A549 (cell line): ENCODE measurements at regions of chr14 and their contacts with region 1.

Region 1: GRCh38 chr14:68862954-68863594 is 70.2 kb upstream of the ZFP36L1 start:
- DNase-seq: peak; percentile 79 to 85
- ATAC-seq: peak; percentile 79 to 85
- H3K4me3 ChIP-seq: no peak overlapping the region
- H3K27ac ChIP-seq: peak overlapping the region; percentile 41 to 62; a peak in 3 of 6 replicates
- H3K4me1 ChIP-seq: no peaks in the 10 kb centered on the region
- CTCF ChIP-seq: peak; percentile 90
- EP300 ChIP-seq: no peak
- POLR2A ChIP-seq: no peak
- RAD21 ChIP-seq: peak; percentile 94 to 95

Region 2: GRCh38 chr14:67883717-67884116 is 979.4 kb before region 1 on chr14:
- CTCF ChIA-PET with region 1: interaction called, 17 read pairs
- POLR2A ChIA-PET with region 1: no interaction called
- DNase-seq: peak; percentile 18
- ATAC-seq: no peak
- H3K4me3 ChIP-seq: no peak overlapping the region
- H3K27ac ChIP-seq: peak overlapping the region in 1 of 2 experiments; percentile 71; a peak in 2 of 6 replicates
- H3K4me1 ChIP-seq: peaks cover 12% of the 10 kb centered on the region; the same call in 1 of the 3 replicates
- CTCF ChIP-seq: peak; percentile 65
- EP300 ChIP-seq: no peak
- POLR2A ChIP-seq: no peak
- RAD21 ChIP-seq: peak; percentile 64 to 79

Region 3: GRCh38 chr14:68444449-68445168 is 418.5 kb before region 1 on chr14:
- CTCF ChIA-PET with region 1: no interaction called
- POLR2A ChIA-PET with region 1: no interaction called
- DNase-seq: no peak
- ATAC-seq: no peak
- H3K4me3 ChIP-seq: no peak overlapping the region
- H3K27ac ChIP-seq: peak overlapping the region; percentile 42 to 57
- H3K4me1 ChIP-seq: peaks cover 43% of the 10 kb centered on the region
- CTCF ChIP-seq: no peak
- EP300 ChIP-seq: no peak
- POLR2A ChIP-seq: no peak
- RAD21 ChIP-seq: no peak

Region 4: DNA sequence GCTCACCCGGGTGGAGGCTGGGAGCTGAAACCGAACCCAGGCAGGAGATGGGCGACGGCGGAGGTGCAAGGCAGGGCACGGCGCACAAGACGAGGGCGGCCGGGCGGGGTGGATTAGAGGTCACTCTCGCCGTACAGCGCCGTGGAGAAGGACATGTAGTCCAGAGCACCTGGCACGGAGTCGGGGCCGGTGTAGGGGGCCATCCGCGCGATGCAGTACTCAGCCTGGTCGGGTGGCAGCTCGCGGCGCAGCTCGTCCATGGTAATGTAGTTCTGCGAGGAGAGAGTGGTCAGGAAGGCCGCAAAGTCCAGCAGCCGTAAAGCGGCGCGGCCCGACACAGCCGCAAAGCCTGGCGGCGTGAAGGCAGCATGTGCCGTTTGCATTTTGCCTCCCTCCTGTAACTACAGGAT is 11.7 kb after region 1 on chr14:
- CTCF ChIA-PET with region 1: interaction called, 33 read pairs
- POLR2A ChIA-PET with region 1: interaction called, 4 read pairs
- DNase-seq: no peak
- ATAC-seq: no peak
- H3K4me3 ChIP-seq: no peak overlapping the region
- H3K27ac ChIP-seq: no peak overlapping the region
- H3K4me1 ChIP-seq: no peaks in the 10 kb centered on the region
- CTCF ChIP-seq: no peak
- EP300 ChIP-seq: no peak
- POLR2A ChIP-seq: no peak
- RAD21 ChIP-seq: no peak

Region 5: GRCh38 chr14:68911594-68912227 is 48.6 kb after region 1 on chr14:
- CTCF ChIA-PET with region 1: interaction called, 30 read pairs
- POLR2A ChIA-PET with region 1: no interaction called
- DNase-seq: peak; percentile 78 to 92
- ATAC-seq: peak; percentile 89 to 95
- H3K4me3 ChIP-seq: no peak overlapping the region
- H3K27ac ChIP-seq: peak overlapping the region; percentile 42 to 55; a peak in 4 of 6 replicates
- H3K4me1 ChIP-seq: peaks cover 31% of the 10 kb centered on the region
- CTCF ChIP-seq: peak; percentile 99
- EP300 ChIP-seq: no peak
- POLR2A ChIP-seq: no peak
- RAD21 ChIP-seq: peak; percentile 97 to 98

Region 6: DNA sequence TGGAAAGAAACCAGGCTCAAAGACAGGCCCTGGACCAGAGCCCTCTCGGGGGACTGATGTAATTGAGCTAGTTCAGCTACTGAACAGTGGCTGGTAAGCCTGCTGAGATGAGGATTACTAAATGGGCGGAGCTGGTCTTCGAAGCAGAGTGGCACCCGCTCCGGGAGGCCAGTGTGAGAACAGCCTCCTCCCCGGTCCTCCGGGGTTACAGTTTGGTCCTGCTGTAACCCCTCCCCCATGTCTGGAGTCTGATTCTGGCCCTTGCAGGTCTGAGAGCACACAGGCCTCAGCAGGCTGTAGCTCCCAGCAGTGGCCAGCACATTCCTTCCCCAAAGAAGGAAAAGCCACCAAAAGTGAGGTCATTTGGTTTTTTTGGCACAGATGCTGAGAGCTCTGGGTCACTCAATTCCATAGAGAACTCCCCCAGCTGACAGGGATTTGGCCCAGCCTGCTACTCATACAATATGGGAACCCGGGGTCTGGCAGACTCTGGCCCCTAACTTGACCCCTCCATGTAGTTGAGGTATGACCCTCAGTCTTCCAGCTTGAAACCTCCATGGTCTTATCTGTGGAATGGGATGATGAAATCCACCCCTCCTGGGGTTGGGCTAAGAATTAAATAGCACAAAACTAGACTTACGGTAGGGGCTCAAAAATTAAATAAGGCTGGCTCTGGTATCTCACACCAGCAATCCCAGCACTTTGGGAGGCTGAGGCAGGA is 77.0 kb after region 1 on chr14:
- CTCF ChIA-PET with region 1: interaction called, 22 read pairs
- POLR2A ChIA-PET with region 1: interaction called, 3 read pairs
- DNase-seq: peak; percentile 82 to 98
- ATAC-seq: peak; percentile 69 to 78
- H3K4me3 ChIP-seq: no peak overlapping the region
- H3K27ac ChIP-seq: peak overlapping the region; percentile 98 to 99
- H3K4me1 ChIP-seq: peaks cover 95% of the 10 kb centered on the region
- CTCF ChIP-seq: no peak
- EP300 ChIP-seq: peak; percentile 61 to 84; a peak in 3 of 5 replicates
- POLR2A ChIP-seq: no peak
- RAD21 ChIP-seq: peak; percentile 19 to 48; a peak in 4 of 5 replicates

Region 7: DNA sequence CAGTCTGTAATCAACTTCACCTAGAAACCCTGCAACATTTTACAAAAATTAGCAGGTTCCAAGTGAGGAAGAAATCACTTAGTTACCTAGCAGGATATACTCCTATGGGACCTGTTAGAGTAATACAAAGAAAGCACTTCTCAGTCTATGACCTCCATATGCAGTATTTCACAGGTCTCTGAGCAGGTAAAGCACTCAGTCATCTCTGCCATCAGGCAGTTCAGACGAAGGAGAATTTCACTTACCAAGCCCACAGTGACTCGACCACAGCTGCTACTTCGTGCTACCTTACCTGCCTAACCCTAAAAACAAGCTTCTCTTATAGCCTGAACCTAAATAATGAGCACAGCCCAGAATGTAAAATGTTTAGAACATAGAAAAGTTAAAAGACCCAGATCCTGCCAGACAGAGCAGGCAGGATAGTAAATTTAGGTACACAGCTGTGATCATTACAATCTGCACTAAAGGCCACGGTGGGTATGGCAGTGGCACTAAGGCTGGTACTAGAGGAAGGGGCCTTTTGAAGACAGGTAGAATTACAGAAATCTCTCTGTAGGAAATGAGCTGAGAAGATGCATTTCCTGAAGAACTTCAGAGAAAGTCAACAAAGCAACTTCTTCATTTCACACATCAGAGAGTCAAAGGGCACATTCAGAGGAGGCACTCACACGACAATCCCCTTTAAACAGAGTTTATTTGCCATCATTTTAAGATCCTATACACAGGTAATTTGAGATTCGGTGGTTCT is 254.1 kb after region 1 on chr14:
- CTCF ChIA-PET with region 1: interaction called, 233 read pairs
- POLR2A ChIA-PET with region 1: no interaction called
- DNase-seq: no peak
- ATAC-seq: no peak
- H3K4me3 ChIP-seq: no peak overlapping the region
- H3K27ac ChIP-seq: no peak overlapping the region
- H3K4me1 ChIP-seq: no peaks in the 10 kb centered on the region
- CTCF ChIP-seq: no peak
- EP300 ChIP-seq: no peak
- POLR2A ChIP-seq: no peak
- RAD21 ChIP-seq: no peak